H1 (cell line): ENCODE measurements at regions of chr6 and their contacts with region 1.

Region 1: GRCh38 chr6:90610751-90611542 is 24.1 kb upstream of the MAP3K7 start:
- DNase-seq: peak in 1 of 2 experiments; percentile 77
- H3K4me3 ChIP-seq: peak overlapping the region; percentile 54 to 72 (median 58)
- H3K27ac ChIP-seq: no peak overlapping the region
- H3K4me1 ChIP-seq: peaks cover 4 to 12% (median 7%) of the 10 kb centered on the region in 4 experiments
- H3K27me3 ChIP-seq: peaks cover 0 to 10% (median 7%) of the 10 kb centered on the region in 4 experiments; a peak in 6 of 7 replicates
- CTCF ChIP-seq: peak in 1 of 3 experiments; percentile 7; a peak in 1 of 4 replicates
- EP300 ChIP-seq: no peak
- POLR2A ChIP-seq: no peak; a peak in 1 of 3 replicates
- RAD21 ChIP-seq: no peak

Region 2: GRCh38 chr6:90596967-90597539 is 13.9 kb before region 1 on chr6:
- CTCF ChIA-PET with region 1: interaction called, 10 read pairs
- POLR2A ChIA-PET with region 1: interaction called, 3 read pairs
- DNase-seq: no peak
- H3K4me3 ChIP-seq: no peak overlapping the region
- H3K27ac ChIP-seq: no peak overlapping the region
- H3K4me1 ChIP-seq: no peaks in the 10 kb centered on the region; a peak in 1 of 7 replicates
- H3K27me3 ChIP-seq: 0 out of 7 replicates have a peak, but pooled peaks cover 0 to 1% (median 0%) of the 10 kb centered on the region in 4 experiments
- CTCF ChIP-seq: no peak
- EP300 ChIP-seq: no peak
- POLR2A ChIP-seq: no peak
- RAD21 ChIP-seq: no peak

Region 3: GRCh38 chr6:90643381-90643780 is 32.4 kb after region 1 on chr6:
- CTCF ChIA-PET with region 1: no interaction called
- POLR2A ChIA-PET with region 1: no interaction called
- DNase-seq: no peak
- H3K4me3 ChIP-seq: no peak overlapping the region
- H3K27ac ChIP-seq: no peak overlapping the region
- H3K4me1 ChIP-seq: no peaks in the 10 kb centered on the region
- H3K27me3 ChIP-seq: no peaks in the 10 kb centered on the region
- CTCF ChIP-seq: no peak
- EP300 ChIP-seq: no peak
- POLR2A ChIP-seq: no peak
- RAD21 ChIP-seq: no peak

Region 4: DNA sequence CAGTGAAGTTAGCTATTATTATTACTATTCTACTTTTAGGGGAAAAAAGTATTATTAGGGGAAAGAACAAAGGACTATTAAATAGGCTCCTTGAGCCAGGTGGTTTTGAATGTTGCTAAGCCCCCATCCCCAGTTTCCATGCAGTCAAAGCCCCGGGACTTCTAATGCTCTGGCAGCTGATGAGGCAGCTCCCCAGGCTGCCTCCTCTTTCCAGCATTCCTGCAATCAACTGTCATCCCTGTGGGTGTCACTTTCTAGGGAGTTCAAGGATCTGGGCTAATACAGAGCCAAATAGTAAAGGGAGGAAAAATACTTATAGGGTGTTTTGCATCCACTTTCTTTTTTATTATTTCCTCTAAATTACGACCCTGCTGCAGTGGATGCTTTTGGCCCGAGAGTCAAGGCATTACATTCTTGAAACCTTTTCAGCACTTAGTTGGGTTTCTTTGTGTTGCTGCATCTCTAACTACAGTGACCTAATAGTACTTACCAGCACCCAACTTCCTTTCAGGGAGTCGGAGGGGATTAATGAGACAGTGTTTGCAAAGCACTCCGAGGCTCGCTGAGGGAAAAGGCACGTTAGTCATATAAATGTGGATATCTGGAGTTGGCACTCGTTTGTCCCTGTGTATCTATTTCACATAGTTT is 279.9 kb after region 1 on chr6:
- CTCF ChIA-PET with region 1: interaction called, 25 read pairs
- POLR2A ChIA-PET with region 1: no interaction called
- DNase-seq: no peak
- H3K4me3 ChIP-seq: no peak overlapping the region
- H3K27ac ChIP-seq: no peak overlapping the region
- H3K4me1 ChIP-seq: peaks cover 0 to 8% (median 3%) of the 10 kb centered on the region in 4 experiments; a peak in 3 of 7 replicates
- H3K27me3 ChIP-seq: no peaks in the 10 kb centered on the region
- CTCF ChIP-seq: no peak
- EP300 ChIP-seq: no peak
- POLR2A ChIP-seq: no peak
- RAD21 ChIP-seq: no peak